ENCODE measurements at regions of chr12 and their contacts with region 1.

Region 1: DNA sequence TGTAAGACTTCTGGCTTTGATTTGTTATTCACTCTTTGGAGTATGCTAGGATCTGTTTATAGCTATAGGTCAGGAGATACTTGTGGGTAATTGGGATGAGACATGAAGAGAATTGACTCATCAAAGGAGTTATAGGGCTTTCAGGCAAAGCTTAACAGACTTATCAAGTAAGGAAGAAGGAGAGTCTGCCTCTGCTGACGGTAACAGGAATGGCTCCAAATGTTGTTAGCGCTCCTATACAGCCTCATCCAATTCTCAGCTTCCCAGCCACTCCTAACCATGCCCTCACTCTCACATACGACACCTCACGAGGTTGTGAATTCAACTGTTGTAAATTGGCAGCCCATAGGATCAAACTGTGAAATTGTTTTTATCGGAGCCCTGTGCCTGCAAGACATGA is 140.5 kb downstream of the KCNA5 start:
- DNase-seq: no peak
- H3K4me3 ChIP-seq: no peak overlapping the region
- H3K27me3 ChIP-seq: peaks cover 2% of the 10 kb centered on the region; the same call in 1 of the 2 replicates
- CTCF ChIP-seq: no peak

Region 2: DNA sequence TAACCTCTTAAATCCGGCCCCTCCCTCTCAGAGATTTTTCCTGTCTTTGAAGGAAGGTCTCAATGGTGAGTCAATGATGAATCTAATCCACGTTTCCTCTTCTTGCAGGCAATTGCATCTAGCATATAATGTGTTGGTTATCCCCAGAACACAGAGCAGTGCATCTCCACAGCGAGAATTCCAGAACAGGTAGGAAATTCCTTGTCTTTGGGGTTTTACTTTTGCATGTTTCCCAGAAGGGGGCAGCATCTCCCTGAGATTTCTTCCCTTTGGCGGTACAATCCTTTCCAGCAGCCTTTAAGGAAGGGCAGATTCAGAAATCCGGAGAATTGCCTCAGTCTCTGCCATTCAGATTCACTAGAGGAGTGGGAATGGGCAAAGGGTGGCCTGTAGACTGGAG is 12.5 kb before region 1 on chr12:
- CTCF ChIA-PET with region 1: interaction called, 14 read pairs
- POLR2A ChIA-PET with region 1: no interaction called
- DNase-seq: no peak
- H3K4me3 ChIP-seq: no peak overlapping the region
- H3K27me3 ChIP-seq: no peaks in the 10 kb centered on the region
- CTCF ChIP-seq: peak; percentile 75

Measured in BJ (cell line).